Activated naive CD4-positive, alpha-beta T cell treated with anti-CD3 and anti-CD28 coated beads, Interleukin-2, amount 10 ng/mL, durations not matched to agents 7 days and 5 days (primary cell): ENCODE measurements at regions of chr10 and their contacts with region 1.

Region 1: GRCh38 chr10:115129752-115130151 is 36.6 kb downstream of the ATRNL1 start:
- DNase-seq: no peak
- H3K4me3 Mint-ChIP-seq: no peak overlapping the region
- H3K27ac Mint-ChIP-seq: no peak overlapping the region
- H3K4me1 Mint-ChIP-seq: no peaks in the 10 kb centered on the region
- H3K27me3 Mint-ChIP-seq: no peaks in the 10 kb centered on the region

Region 2: GRCh38 chr10:114876602-114877300 is 253.0 kb before region 1 on chr10:
- CTCF ChIA-PET with region 1: interaction called, 35 read pairs
- DNase-seq: peak; percentile 61
- H3K4me3 Mint-ChIP-seq: no peak overlapping the region
- H3K27ac Mint-ChIP-seq: no peak overlapping the region
- H3K4me1 Mint-ChIP-seq: peaks cover 13% of the 10 kb centered on the region
- H3K27me3 Mint-ChIP-seq: peaks cover 63% of the 10 kb centered on the region

Region 3: DNA sequence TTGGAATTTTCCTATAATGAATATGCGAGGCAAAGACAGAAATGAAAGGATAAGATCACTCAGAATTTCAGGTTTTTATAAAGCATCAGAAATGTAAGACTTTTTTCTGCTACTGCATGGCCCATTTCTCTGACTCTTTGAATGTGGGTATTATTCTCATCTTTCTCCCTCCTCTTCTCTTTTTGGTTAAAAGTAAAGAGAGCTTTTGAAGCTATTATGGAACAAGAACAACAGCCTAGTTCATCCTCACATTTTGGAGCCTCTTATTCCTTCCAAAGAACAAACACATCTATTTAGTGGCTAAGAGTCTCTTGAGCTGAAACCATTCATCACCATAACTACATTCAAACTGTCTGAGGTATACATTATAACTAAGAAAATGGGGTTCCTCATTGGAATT is 56.0 kb before region 1 on chr10:
- CTCF ChIA-PET with region 1: no interaction called
- DNase-seq: no peak
- H3K4me3 Mint-ChIP-seq: no peak overlapping the region
- H3K27ac Mint-ChIP-seq: no peak overlapping the region
- H3K4me1 Mint-ChIP-seq: no peaks in the 10 kb centered on the region
- H3K27me3 Mint-ChIP-seq: peaks cover 5% of the 10 kb centered on the region

Region 4: DNA sequence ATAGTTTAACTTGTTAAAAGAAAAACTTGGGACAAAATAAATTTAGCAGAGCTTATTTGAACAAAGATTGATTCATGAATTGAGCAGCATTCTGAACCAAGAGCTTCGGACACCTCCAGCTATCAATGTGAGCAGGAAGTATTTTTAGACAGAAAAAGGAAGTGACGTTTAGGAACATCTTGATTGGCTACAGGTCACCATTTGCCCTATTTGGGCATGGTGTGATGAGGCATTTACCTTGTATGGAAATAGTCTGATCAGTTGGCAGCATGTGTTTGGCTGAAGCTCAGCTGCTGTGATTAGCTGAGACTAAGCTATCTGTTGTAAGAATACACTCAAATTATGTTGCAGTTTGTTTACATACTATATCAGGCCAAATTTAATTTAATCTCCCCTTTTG is 148.5 kb after region 1 on chr10:
- CTCF ChIA-PET with region 1: no interaction called
- DNase-seq: no peak
- H3K4me3 Mint-ChIP-seq: no peak overlapping the region
- H3K27ac Mint-ChIP-seq: no peak overlapping the region
- H3K4me1 Mint-ChIP-seq: no peaks in the 10 kb centered on the region
- H3K27me3 Mint-ChIP-seq: no peaks in the 10 kb centered on the region